Activated B cell treated with CpG ODN at 0.5 μM for 24 hours (primary cell): ENCODE measurements at regions of chr5 and their contacts with region 1.

Region 1: DNA sequence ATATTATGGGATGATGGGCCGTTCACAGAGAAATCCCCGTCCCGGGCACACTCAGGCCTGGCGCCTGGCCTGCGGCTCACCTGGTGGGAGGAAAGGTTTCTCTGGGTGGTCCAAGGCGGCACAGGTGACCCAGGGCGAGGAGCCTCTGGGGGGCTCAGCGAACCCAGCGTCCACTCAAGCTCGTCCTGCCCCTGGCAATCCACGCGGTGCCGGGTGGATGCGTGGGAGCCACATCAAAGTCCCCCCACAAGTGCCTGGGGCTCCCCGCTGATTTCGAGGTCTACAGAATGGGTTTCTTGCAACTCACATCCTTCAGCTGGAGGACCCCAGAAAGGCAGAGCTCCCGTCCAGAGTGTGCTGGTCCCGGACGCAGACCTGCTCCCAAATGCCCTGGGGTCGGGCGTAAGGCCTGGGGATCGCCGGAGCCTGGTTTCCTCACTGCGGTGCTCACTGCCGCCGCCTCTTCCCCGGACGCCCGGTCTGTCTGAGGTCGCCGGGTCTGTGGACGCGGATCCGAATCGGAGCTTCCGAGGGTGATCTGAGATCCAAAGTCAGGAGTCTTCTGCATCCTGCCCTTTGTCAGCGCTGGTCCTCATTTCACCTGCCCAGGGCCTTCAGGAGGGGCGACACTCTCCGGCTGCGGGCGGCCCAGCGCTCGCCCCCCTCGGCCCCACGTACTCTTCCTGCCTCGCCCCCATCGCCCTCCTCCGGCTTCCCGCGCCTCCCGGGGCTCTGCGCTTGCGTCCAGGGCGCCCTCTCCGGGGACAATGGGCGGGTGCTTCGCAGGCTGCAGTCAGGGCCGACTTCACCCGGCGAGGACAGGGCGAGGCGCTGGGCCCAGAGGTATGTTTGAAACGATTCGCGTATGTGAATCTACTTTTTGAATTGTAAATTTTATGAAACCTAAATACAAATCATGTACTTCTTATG is 20.0 kb upstream of the RUFY1 start:
- DNase-seq: peak; percentile 68
- ATAC-seq: peak; percentile 80
- H3K4me3 Mint-ChIP-seq: peak overlapping the region; percentile 78
- H3K27ac Mint-ChIP-seq: no peak overlapping the region
- H3K4me1 Mint-ChIP-seq: peaks cover 33% of the 10 kb centered on the region
- H3K27me3 Mint-ChIP-seq: no peaks in the 10 kb centered on the region
- CTCF ChIP-seq: no peak

Region 2: DNA sequence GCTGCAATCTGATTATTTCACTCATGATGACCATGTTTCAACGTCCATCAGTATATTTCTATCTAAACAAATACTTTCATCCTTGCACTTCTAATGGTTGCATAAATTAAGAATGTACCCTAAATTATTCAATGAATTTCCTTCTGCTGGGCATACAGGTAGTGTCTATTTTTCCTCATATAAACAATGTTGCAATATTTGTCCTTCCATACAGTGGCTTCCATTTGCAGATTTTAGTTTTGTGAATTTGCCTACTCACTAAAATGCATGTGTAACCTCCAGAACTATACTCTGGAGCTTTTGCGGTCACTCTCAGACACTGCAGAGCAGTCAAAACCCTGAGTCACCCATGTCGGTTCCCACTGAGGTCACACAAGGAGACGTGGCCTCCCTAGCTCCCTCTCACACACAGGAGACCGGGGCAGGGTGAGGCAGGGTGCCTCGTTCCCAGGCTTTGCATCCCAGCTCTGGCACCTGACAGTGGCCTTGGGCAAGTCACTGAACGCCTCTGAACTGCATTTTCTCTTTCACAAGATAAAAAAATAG is 744.4 kb before region 1 on chr5:
- CTCF ChIA-PET with region 1: no interaction called
- POLR2A ChIA-PET with region 1: no interaction called
- intact Hi-C with region 1: no loop called
- DNase-seq: no peak
- ATAC-seq: no peak
- H3K4me3 Mint-ChIP-seq: no peak overlapping the region
- H3K27ac Mint-ChIP-seq: no peak overlapping the region
- H3K4me1 Mint-ChIP-seq: no peaks in the 10 kb centered on the region
- H3K27me3 Mint-ChIP-seq: peaks cover 3% of the 10 kb centered on the region
- CTCF ChIP-seq: no peak

Region 3: GRCh38 chr5:179542170-179542569 is 11.8 kb after region 1 on chr5:
- CTCF ChIA-PET with region 1: interaction called, 3 read pairs
- POLR2A ChIA-PET with region 1: interaction called, 25 read pairs
- intact Hi-C with region 1: loop called (anchors 1 kb)
- DNase-seq: no peak
- ATAC-seq: no peak
- H3K4me3 Mint-ChIP-seq: no peak overlapping the region
- H3K27ac Mint-ChIP-seq: peak overlapping the region; percentile 54
- H3K4me1 Mint-ChIP-seq: peaks cover 47% of the 10 kb centered on the region
- H3K27me3 Mint-ChIP-seq: no peaks in the 10 kb centered on the region
- CTCF ChIP-seq: no peak

Region 4: GRCh38 chr5:179550511-179551230 is 20.3 kb after region 1 on chr5 and contains the start of gene RUFY1:
- CTCF ChIA-PET with region 1: interaction called, 3 read pairs
- POLR2A ChIA-PET with region 1: interaction called, 63 read pairs
- intact Hi-C with region 1: loop called (anchors 1 kb)
- DNase-seq: peak; percentile 91
- ATAC-seq: peak; percentile 70
- H3K4me3 Mint-ChIP-seq: peak within 1 kb of the TSS; percentile 97
- H3K27ac Mint-ChIP-seq: peak within 1 kb of the TSS; percentile 100
- H3K4me1 Mint-ChIP-seq: peaks cover 60% of the 10 kb centered on the region
- H3K27me3 Mint-ChIP-seq: no peaks in the 10 kb centered on the region
- CTCF ChIP-seq: no peak
- total RNA-seq, gene RUFY1: 83.0 and 95.8 TPM in 2 replicates

Region 5: DNA sequence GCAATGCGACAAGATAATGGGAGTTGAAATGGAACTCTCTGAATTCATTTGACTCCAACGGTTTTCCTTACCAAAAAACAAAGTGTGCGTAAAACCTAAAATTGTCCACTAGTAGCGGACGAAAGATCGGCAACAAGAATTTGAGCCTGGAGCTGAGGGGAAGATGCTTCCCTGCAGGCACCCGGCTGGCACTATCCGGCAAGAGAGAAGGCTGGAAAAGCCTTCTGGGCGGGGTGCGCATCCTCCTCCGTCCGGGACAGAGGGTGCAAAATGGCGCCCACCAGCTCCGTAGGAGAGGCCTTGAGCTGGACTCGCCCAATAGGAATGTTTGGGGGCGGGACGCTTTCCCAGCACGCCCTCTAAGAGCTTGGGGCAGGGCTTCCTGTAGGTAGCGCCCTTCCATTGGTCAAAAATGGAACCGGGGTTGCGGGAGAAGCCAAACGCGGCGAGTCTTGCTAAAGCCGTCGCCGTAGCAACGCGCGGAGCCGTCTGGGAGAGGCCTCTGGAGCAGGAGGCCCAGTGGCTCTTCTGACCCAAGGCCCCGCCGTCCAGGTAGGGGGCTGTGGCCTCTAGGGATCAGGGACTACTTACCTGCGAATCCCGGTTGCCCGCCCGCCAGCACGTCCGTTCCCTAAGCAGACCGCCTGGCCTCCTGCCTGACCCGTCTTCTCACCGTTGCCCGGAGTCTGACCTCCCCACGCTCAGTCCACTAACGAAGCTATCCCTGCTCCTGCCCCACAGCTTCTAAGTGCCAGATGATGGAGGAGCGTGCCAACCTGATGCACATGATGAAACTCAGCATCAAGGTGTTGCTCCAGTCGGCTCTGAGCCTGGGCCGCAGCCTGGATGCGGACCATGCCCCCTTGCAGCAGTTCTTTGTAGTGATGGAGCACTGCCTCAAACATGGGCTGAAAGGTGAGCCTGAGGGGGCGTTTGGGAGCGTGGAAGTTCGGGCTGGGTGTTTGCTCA is 29.2 kb after region 1 on chr5:
- CTCF ChIA-PET with region 1: no interaction called
- POLR2A ChIA-PET with region 1: interaction called, 8 read pairs
- intact Hi-C with region 1: loop called (anchors 2 kb)
- DNase-seq: peak; percentile 64
- ATAC-seq: peak; percentile 100
- H3K4me3 Mint-ChIP-seq: peak overlapping the region; percentile 86
- H3K27ac Mint-ChIP-seq: peak overlapping the region; percentile 84
- H3K4me1 Mint-ChIP-seq: peaks cover 17% of the 10 kb centered on the region
- H3K27me3 Mint-ChIP-seq: no peaks in the 10 kb centered on the region
- CTCF ChIP-seq: no peak